H1 (cell line): ENCODE measurements at regions of chr6 and their contacts with region 1.

Region 1: DNA sequence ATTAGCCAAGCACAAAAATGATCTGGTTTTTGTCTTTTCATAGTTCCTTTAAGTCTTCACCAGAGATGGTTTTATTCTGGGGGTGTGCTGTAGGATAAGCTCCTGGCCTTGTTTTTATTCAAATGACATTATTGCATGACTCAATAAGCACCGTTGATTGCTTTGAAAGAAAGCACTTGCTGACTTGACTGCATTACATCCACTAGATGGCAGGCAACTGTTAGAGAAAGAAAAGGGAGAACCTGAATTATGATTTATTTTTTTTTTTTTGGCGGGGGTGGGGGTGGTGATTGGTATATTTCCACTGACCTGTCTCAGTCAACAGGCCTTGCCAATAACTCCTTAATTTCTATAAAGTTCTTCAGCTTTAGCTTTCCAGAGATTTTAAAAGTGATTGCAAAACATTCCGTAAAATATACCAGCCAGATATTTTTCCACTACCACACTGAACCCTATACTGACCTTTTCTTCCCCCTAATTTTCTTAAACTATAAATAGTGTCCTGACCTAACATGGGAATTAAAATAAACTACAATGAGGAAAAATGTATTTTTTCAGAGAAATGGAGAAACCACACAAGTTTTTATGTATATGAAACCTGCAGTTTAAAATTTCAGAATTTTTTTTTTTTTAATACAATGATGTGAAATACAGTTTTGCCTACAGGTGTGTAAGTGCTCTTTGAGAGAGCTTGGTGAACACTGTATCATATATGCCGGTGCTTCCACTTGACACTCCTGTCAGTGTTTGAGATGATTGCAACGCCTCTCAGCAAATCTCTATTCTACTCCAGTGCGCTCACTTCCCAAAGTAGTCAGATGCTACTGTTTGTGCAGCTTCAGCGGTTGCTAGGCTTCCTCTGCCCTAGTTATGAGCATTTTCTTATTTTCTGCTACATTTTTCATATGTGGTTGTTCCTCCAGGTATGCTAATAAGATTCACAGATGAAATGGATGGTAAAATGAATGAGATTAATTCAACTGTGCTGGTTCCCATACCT is 274.3 kb downstream of the CD109 start:
- DNase-seq: no peak
- H3K4me3 ChIP-seq: no peak overlapping the region
- H3K27ac ChIP-seq: no peak overlapping the region
- H3K4me1 ChIP-seq: no peaks in the 10 kb centered on the region
- H3K27me3 ChIP-seq: no peaks in the 10 kb centered on the region
- CTCF ChIP-seq: peak in 2 of 3 experiments; percentile 55 to 65; a peak in 3 of 4 replicates
- EP300 ChIP-seq: peak in 1 of 2 experiments; percentile 66; a peak in 2 of 3 replicates
- POLR2A ChIP-seq: no peak
- RAD21 ChIP-seq: peak; percentile 82 to 84

Region 2: DNA sequence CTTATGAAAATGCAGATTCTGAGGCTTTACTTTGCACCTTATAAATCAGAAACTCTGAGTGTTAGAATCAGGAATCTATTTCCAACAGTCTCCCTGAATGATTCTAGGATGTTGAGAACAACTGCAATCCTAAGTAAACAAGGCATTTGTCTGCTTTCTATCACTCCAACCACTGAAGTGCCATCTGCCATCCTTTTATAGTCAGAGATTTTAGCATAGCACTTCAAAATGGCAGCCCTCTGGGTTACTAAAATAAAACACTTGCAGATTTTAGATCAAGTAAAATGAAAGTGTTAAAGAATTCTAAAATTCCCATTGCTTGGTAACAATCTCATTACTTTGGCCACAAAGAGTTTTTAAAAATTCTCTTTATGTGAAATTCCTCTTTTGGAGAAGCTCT is 15.4 kb before region 1 on chr6:
- CTCF ChIA-PET with region 1: interaction called, 14 read pairs
- POLR2A ChIA-PET with region 1: no interaction called
- DNase-seq: no peak
- H3K4me3 ChIP-seq: no peak overlapping the region
- H3K27ac ChIP-seq: no peak overlapping the region
- H3K4me1 ChIP-seq: no peaks in the 10 kb centered on the region
- H3K27me3 ChIP-seq: no peaks in the 10 kb centered on the region
- CTCF ChIP-seq: no peak
- EP300 ChIP-seq: no peak
- POLR2A ChIP-seq: no peak
- RAD21 ChIP-seq: no peak

Region 3: GRCh38 chr6:73985891-73986290 is 15.6 kb after region 1 on chr6:
- CTCF ChIA-PET with region 1: interaction called, 32 read pairs
- POLR2A ChIA-PET with region 1: no interaction called
- DNase-seq: peak in 1 of 2 experiments; percentile 7
- H3K4me3 ChIP-seq: no peak overlapping the region
- H3K27ac ChIP-seq: no peak overlapping the region
- H3K4me1 ChIP-seq: no peaks in the 10 kb centered on the region
- H3K27me3 ChIP-seq: no peaks in the 10 kb centered on the region
- CTCF ChIP-seq: peak; percentile 59 to 80 (median 60)
- EP300 ChIP-seq: no peak
- POLR2A ChIP-seq: no peak
- RAD21 ChIP-seq: peak; percentile 60 to 68

Region 4: DNA sequence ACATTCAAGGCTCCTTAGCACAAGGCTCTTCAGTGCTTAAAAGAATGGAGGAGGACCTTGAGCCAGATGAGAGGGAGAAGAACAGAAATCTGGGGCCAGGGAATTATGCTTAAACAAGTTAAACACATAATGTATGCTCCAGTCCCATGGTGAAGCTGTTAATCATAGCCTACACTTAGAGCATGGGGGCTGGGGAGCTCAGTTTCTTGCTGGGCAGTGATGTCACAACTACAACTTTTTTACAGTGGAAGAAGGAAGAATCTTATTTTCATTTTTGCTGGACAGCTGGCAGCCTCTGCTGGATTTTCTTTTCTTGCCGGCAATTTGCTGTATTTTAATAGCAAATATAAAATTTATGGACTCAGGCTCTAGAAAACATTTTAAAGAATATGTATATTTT is 158.3 kb after region 1 on chr6:
- CTCF ChIA-PET with region 1: no interaction called
- POLR2A ChIA-PET with region 1: no interaction called
- DNase-seq: no peak
- H3K4me3 ChIP-seq: no peak overlapping the region
- H3K27ac ChIP-seq: no peak overlapping the region
- H3K4me1 ChIP-seq: no peaks in the 10 kb centered on the region
- H3K27me3 ChIP-seq: no peaks in the 10 kb centered on the region
- CTCF ChIP-seq: no peak
- EP300 ChIP-seq: no peak
- POLR2A ChIP-seq: no peak
- RAD21 ChIP-seq: no peak